SK-N-SH (cell line): ENCODE measurements at regions of chr19 and their contacts with region 1.

Region 1: GRCh38 chr19:4524808-4525562 is 6.7 kb upstream of the PLIN4 start:
- DNase-seq: peak; percentile 79
- H3K4me3 ChIP-seq: no peak overlapping the region
- H3K27ac ChIP-seq: no peak overlapping the region
- H3K4me1 ChIP-seq: no peaks in the 10 kb centered on the region
- H3K27me3 ChIP-seq: no peaks in the 10 kb centered on the region
- CTCF ChIP-seq: peak; percentile 67
- EP300 ChIP-seq: no peak
- RAD21 ChIP-seq: peak; percentile 38

Region 2: DNA sequence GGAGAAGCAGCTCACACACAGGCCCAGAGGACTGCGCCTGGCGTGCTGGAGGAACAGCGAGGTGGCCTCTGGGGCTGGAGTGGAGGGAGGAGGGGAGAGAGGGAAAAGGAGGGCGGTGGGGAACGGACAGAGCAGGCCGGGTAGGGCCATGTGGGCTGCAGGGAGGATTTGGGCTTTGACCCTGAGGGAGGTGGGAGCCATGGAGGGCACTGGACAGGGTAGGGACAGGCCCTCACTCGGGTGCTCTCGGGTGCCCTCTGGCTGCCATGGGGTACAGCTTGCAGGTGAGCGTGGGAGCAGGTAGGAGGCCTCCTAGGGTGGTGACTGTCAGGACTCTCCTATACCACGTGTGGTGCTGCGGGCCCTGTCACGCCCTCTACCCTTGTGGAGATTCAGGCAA is 29.5 kb before region 1 on chr19:
- CTCF ChIA-PET with region 1: interaction called, 11 read pairs
- POLR2A ChIA-PET with region 1: no interaction called
- DNase-seq: no peak
- H3K4me3 ChIP-seq: no peak overlapping the region
- H3K27ac ChIP-seq: no peak overlapping the region
- H3K4me1 ChIP-seq: no peaks in the 10 kb centered on the region
- H3K27me3 ChIP-seq: no peaks in the 10 kb centered on the region
- CTCF ChIP-seq: no peak
- EP300 ChIP-seq: no peak
- RAD21 ChIP-seq: no peak

Region 3: DNA sequence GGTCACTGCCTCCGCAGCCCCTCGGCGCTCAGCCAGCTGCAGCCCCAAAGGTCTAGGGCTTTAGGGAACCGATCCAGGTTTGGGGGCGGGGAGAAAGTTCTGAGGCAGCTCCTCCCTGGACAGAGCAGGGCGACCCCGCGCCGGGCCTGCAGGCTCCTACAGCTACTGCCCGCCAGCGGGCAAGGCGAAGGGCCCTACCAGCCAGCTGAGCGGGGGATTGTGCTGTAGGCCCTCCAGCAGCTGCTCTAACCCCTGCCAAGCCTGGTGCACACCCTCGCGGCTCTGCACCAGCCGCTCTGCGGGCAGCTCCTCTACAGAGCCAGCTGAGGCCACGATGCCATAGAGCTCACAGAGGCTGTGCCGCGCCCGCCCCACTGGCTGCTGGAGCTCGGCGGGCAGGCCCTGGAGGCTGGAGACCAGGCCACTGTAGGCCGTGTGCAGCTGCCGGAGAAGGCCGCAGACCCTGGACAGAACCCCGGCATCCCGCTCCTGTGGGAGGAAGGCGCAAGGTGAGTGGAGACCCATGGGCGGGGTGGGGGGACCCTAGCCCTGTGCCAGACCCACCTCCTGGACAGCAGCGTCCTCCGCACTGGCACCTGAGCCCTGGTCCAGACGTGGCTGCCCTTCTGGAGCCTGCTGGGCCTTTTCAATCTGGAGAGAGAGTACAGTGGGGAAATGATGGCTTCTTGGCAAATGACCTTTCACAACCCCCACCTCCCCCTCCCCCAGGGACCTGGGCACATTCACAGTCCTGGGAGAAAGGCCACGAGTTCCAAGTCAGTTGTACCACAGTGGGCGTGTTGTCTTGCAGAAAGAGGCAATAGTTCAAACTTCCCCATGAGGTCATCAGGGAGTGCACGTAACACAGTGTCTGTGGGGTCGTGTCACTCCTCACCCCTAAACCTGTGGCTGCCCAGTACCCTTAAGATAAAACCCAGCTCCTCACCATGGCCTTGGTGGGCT is 20.4 kb before region 1 on chr19:
- CTCF ChIA-PET with region 1: interaction called, 24 read pairs
- POLR2A ChIA-PET with region 1: no interaction called
- DNase-seq: no peak
- H3K4me3 ChIP-seq: no peak overlapping the region
- H3K27ac ChIP-seq: no peak overlapping the region
- H3K4me1 ChIP-seq: 0 out of 4 replicates have a peak, but pooled peaks cover 0 to 7% of the 10 kb centered on the region in 2 experiments
- H3K27me3 ChIP-seq: no peaks in the 10 kb centered on the region
- CTCF ChIP-seq: no peak
- EP300 ChIP-seq: no peak
- RAD21 ChIP-seq: no peak

Region 4: GRCh38 chr19:4510435-4511194 is 14.4 kb before region 1 on chr19:
- CTCF ChIA-PET with region 1: interaction called, 22 read pairs
- POLR2A ChIA-PET with region 1: no interaction called
- DNase-seq: no peak
- H3K4me3 ChIP-seq: no peak overlapping the region
- H3K27ac ChIP-seq: no peak overlapping the region
- H3K4me1 ChIP-seq: 0 out of 4 replicates have a peak, but pooled peaks cover 0 to 7% of the 10 kb centered on the region in 2 experiments
- H3K27me3 ChIP-seq: no peaks in the 10 kb centered on the region
- CTCF ChIP-seq: no peak
- EP300 ChIP-seq: no peak
- RAD21 ChIP-seq: no peak

Region 5: DNA sequence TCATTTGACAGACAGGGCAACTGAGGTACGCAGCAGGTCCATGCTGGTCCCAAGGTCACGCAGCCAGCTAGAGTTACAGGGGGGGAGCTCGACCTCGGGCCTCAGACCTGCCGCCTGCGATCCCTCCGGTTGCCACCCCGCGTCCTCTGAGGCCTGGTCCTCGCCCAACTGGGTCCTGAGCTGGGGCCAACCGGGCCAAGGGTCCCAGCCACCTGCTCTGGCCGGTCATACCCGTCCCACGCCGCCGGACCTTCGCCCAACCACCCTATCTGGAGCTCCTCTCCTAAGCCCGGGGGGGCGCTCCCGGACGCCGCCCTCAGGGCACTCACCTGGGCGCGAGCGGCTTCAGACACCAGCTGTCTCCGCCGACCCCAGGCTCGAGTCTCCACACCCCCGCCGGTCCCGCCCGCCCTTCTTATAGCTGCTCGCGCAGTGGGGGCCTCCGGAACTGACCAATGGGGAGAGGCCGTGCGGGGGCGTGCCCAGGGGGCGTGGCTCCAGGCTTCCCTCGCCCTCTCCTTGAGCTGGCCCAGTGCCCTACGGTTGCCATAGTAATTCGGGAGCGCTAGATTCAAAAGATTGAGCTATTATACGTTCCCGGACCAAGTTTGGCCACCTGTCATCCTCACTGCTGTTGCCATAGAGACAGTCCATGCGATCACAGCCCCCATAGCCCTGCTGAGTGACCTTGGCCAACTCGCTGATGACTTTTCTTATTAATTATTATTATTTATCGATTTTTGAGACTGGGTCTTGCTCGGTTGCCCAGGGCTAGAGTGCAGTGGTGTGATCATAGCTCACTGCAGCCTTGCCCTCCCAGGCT is 10.1 kb after region 1 on chr19 and contains the start of gene PLIN5:
- CTCF ChIA-PET with region 1: interaction called, 78 read pairs
- POLR2A ChIA-PET with region 1: interaction called, 4 read pairs
- DNase-seq: peak; percentile 98
- H3K4me3 ChIP-seq: peak within 1 kb of the TSS; percentile 29 to 31; a peak in 3 of 4 replicates
- H3K27ac ChIP-seq: no peak within 1 kb of the TSS
- H3K4me1 ChIP-seq: peaks cover 0 to 13% of the 10 kb centered on the region in 2 experiments; a peak in 2 of 4 replicates
- H3K27me3 ChIP-seq: peaks cover 26% of the 10 kb centered on the region; the same call in 1 of the 2 replicates
- CTCF ChIP-seq: 0 out of 2 replicates have a peak, but pooled peaks have one; percentile 10
- EP300 ChIP-seq: no peak
- RAD21 ChIP-seq: no peak
- polyA plus RNA-seq, gene PLIN5: 0.59 and 0.68 TPM in 2 replicates

Region 6: GRCh38 chr19:4547303-4548237 is 22.6 kb after region 1 on chr19:
- CTCF ChIA-PET with region 1: interaction called, 13 read pairs
- POLR2A ChIA-PET with region 1: interaction called, 4 read pairs
- DNase-seq: peak; percentile 59
- H3K4me3 ChIP-seq: no peak overlapping the region
- H3K27ac ChIP-seq: no peak overlapping the region
- H3K4me1 ChIP-seq: no peaks in the 10 kb centered on the region
- H3K27me3 ChIP-seq: peaks cover 10% of the 10 kb centered on the region
- CTCF ChIP-seq: peak; percentile 50
- EP300 ChIP-seq: no peak
- RAD21 ChIP-seq: no peak

Region 7: DNA sequence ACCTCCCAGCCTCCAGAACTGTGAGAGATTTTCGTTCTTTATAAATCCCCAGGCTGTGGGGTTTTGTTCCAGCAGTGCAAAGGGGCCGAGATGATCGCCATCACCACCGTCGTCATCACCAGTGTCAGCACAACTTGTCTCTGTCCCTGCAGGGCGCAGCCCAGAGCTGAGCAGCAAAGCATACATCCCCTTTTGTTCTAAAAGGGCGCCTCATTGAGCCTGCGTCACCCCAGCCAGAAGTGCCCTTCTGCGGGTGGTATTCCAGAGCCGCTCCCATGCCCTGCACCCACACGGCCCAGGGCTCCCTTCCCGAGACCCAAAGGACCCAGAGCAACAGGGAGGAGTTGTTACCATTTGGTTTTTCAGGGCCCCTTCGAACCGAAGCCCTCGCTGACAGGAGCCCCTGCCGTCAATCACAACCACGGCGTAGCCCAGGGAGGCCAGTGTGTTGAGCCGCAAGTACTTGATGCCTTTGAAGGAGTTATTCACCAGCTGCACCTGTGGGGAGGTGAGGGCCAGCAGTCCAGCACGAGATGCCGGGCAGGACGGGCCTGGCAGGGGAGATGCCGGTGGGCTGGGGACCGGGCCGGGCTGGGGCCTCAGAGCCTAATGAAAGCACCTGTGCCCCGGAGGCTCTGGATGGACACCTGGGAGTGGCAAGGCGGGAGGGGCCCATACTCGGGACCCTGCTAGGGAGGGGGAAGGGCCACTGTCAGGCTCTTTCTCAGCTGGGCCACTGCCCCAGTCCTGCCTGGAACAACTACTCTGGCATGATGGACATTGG is 159.5 kb after region 1 on chr19:
- CTCF ChIA-PET with region 1: no interaction called
- POLR2A ChIA-PET with region 1: no interaction called
- DNase-seq: no peak
- H3K4me3 ChIP-seq: no peak overlapping the region
- H3K27ac ChIP-seq: no peak overlapping the region
- H3K4me1 ChIP-seq: no peaks in the 10 kb centered on the region
- H3K27me3 ChIP-seq: no peaks in the 10 kb centered on the region
- CTCF ChIP-seq: no peak
- EP300 ChIP-seq: no peak
- RAD21 ChIP-seq: no peak